Endothelial cell of umbilical vein (primary cell): ENCODE measurements at regions of chr5 and their contacts with region 1.

Region 1: DNA sequence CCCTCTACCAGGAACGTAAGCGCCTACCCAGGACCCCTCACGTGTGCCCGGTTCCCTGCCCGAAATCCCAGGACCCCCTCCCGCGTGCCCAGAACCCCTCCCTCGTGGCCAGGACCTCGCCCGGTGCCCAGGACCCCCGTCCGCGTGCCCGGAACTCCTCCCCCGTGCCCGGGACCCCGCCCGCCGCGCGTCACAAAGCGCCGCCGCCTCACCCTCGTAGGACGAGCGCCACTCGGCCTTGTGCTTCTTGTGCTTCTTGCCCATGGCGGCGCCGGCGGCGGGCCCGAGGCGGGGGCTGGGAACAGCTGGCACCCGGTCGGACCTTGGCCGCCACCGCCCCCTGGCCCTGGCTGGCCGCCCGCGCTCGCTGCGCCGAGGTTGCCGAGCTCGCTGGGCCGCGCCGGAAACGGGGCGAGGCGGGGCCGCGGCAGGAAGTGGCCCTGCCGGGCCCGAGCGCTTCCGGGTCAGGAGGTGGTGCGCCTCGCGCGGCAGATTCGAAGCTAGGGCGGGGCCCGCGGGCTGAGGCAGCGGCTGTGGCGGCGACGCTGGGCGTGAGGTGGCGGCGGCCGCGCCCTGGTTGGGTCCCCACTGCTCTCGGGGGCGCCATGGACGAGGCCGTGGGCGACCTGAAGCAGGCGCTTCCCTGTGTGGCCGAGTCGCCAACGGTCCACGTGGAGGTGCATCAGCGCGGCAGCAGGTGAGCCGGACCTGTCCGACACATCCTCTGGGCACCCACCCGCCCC is at the starts of genes BRD9 and TRIP13:
- DNase-seq: peak; percentile 74
- H3K4me3 ChIP-seq: peak within 1 kb of the TSS; percentile 56 to 69 (median 63)
- H3K27ac ChIP-seq: peak within 1 kb of the TSS; percentile 82
- H3K4me1 ChIP-seq: peaks cover 14% of the 10 kb centered on the region
- H3K27me3 ChIP-seq: no peaks in the 10 kb centered on the region
- CTCF ChIP-seq: no peak
- POLR2A ChIP-seq: peak; percentile 67
- total RNA-seq, gene BRD9: 58.5 and 67.6 TPM in 2 replicates
- total RNA-seq, gene TRIP13: 32.9 and 39.0 TPM in 2 replicates

Region 2: GRCh38 chr5:873328-873727 is 19.2 kb before region 1 on chr5:
- CTCF ChIA-PET with region 1: no interaction called
- POLR2A ChIA-PET with region 1: no interaction called
- dilution Hi-C with region 1: no loop called
- intact Hi-C with region 1: loop called (anchors 2 kb)
- DNase-seq: peak; percentile 14
- H3K4me3 ChIP-seq: no peak overlapping the region
- H3K27ac ChIP-seq: no peak overlapping the region
- H3K4me1 ChIP-seq: peaks cover 18% of the 10 kb centered on the region
- H3K27me3 ChIP-seq: no peaks in the 10 kb centered on the region
- CTCF ChIP-seq: no peak
- POLR2A ChIP-seq: no peak

Region 3: GRCh38 chr5:956941-957747 is 64.6 kb after region 1 on chr5:
- CTCF ChIA-PET with region 1: no interaction called
- POLR2A ChIA-PET with region 1: no interaction called
- dilution Hi-C with region 1: no loop called
- intact Hi-C with region 1: loop called (anchors 1 kb)
- DNase-seq: peak; percentile 76
- H3K4me3 ChIP-seq: no peak overlapping the region
- H3K27ac ChIP-seq: peak overlapping the region; percentile 59
- H3K4me1 ChIP-seq: peaks cover 19% of the 10 kb centered on the region
- H3K27me3 ChIP-seq: no peaks in the 10 kb centered on the region
- CTCF ChIP-seq: peak; percentile 36 to 45
- POLR2A ChIP-seq: no peak